ENCODE measurements at regions of chr16 and their contacts with region 1.

Region 1: DNA sequence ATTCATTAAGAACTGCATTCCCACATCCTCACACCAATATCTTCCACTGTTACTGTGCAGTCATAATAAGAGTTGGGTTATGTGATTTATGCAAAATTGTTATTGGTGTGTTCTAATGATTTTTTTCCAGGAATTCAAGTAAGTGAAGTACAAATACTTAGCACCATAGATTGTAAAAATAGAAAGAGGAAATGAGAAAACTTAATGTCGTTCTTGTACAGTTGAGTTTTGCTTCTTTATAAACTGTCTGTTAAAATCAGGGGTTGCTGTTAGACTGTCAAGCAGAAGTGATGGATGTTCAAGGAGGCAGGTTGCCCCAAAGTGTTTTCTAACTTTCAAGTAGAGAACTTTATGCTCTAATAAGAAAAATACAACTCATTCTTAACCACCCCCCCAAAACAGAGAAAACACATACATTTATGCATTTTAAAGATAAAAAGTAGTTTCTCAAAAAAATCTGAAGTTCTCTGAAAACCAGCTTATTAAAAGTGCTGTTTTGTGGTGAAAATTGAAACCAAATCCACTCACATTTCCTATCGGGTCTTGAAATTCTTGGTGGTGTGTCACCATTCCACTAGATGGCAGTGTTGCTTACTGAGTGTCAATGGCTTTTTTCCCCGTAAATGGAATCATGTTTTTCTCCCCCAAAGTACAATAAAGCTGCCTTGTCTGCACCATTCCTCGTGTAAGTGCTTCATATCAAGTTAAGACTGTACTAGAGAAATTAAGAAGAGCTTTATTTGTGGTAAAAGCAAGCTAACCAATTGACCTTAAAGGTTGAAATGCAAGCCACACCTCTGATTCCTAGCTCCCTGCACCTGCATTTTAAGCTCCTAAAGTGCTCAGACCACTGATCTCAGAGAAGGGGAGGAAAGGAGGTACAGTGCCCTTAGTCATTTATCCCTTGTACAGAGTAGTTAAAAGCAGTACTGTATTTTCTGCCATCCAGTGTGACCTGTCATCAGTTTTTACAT is 4.7 kb upstream of the IGSF6 start:
- DNase-seq: peak in 7 of 9 experiments; percentile 22 to 83 (median 43)
- ATAC-seq: peak; percentile 36
- H3K4me3 ChIP-seq: no peak overlapping the region
- H3K4me3 Mint-ChIP-seq: no peak overlapping the region
- H3K27ac ChIP-seq: no peak overlapping the region
- H3K27ac Mint-ChIP-seq: peak overlapping the region; percentile 30
- H3K4me1 ChIP-seq: peaks cover 21% of the 10 kb centered on the region
- H3K4me1 Mint-ChIP-seq: peaks cover 35% of the 10 kb centered on the region
- H3K27me3 ChIP-seq: no peaks in the 10 kb centered on the region
- H3K27me3 Mint-ChIP-seq: no peaks in the 10 kb centered on the region
- CTCF ChIP-seq: peak; percentile 93

Region 2: DNA sequence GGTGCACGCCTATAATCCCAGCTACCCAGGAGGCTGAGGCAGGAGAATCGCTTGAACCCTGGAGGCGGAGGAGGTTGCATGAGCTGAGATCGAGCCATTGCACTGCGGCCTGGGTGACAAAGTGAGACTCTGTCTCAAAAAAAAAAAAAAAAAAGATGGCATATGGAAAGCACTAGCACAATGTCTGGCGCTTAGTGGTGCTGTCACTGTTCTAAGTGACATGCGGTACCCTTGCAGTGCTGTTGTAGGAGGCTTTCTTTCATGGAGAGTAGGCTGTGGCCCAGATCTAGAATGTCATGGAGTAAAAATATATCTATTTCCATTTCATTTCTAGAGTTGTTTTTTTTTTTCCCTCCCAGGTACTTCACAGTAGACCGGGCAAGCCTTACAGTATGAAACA is 72.3 kb before region 1 on chr16:
- CTCF ChIA-PET with region 1: interaction called, 13 read pairs
- POLR2A ChIA-PET with region 1: no interaction called
- intact Hi-C with region 1: no loop called
- DNase-seq: no peak
- ATAC-seq: no peak
- H3K4me3 ChIP-seq: no peak overlapping the region
- H3K4me3 Mint-ChIP-seq: no peak overlapping the region
- H3K27ac ChIP-seq: no peak overlapping the region
- H3K27ac Mint-ChIP-seq: no peak overlapping the region
- H3K4me1 ChIP-seq: no peaks in the 10 kb centered on the region
- H3K4me1 Mint-ChIP-seq: peaks cover 2% of the 10 kb centered on the region
- H3K27me3 ChIP-seq: no peaks in the 10 kb centered on the region
- H3K27me3 Mint-ChIP-seq: no peaks in the 10 kb centered on the region
- CTCF ChIP-seq: no peak

Region 3: DNA sequence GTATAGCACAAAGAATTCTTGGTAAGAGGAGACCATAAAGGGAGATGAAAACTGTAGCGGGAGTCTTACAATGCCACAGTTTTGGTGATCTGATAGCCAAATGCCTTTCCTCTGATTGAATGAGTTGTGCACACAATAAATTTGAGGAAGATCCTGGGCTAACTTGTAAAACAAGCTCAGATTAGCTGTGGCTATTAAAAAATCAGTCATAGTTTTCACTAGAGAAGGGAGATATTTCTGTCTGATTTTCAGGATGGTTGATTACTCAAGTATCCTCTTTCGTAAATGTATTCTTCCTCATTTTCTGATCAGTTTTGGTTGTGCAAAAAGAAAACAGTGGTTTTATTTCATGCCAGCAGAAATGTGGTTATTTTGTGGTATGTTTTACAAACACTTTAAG is 66.8 kb before region 1 on chr16:
- CTCF ChIA-PET with region 1: interaction called, 13 read pairs
- POLR2A ChIA-PET with region 1: no interaction called
- intact Hi-C with region 1: no loop called
- DNase-seq: no peak
- ATAC-seq: no peak
- H3K4me3 ChIP-seq: no peak overlapping the region
- H3K4me3 Mint-ChIP-seq: no peak overlapping the region
- H3K27ac ChIP-seq: no peak overlapping the region
- H3K27ac Mint-ChIP-seq: no peak overlapping the region
- H3K4me1 ChIP-seq: no peaks in the 10 kb centered on the region
- H3K4me1 Mint-ChIP-seq: no peaks in the 10 kb centered on the region
- H3K27me3 ChIP-seq: no peaks in the 10 kb centered on the region
- H3K27me3 Mint-ChIP-seq: no peaks in the 10 kb centered on the region
- CTCF ChIP-seq: no peak

Region 4: DNA sequence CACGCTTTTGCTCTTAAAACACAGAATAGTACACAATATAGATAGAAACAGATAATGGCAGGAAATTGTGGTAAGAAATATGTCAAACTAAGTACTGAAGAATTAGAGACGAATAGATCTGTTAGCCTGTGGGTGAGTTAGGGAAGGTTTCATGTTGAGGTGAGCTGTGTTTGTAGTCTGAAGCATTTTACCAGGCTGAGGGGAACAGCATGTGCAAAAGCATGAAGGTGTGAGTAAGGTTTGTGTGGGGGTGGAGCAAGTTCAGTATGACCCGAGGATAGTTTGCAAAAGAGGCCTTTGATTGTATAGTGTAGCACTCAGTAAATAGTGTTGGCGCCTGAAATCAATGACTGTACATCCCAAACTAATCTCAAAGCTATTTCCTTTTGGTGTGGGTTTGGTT is 18.5 kb before region 1 on chr16:
- CTCF ChIA-PET with region 1: interaction called, 81 read pairs
- POLR2A ChIA-PET with region 1: interaction called, 4 read pairs
- intact Hi-C with region 1: loop called in 1 of 2 experiments (anchors 2 kb)
- DNase-seq: peak in 2 of 9 experiments; percentile 27 to 53
- ATAC-seq: peak; percentile 47
- H3K4me3 ChIP-seq: no peak overlapping the region
- H3K4me3 Mint-ChIP-seq: peak overlapping the region; percentile 4
- H3K27ac ChIP-seq: peak overlapping the region; percentile 8 to 60
- H3K27ac Mint-ChIP-seq: peak overlapping the region; percentile 87
- H3K4me1 ChIP-seq: peaks cover 29% of the 10 kb centered on the region
- H3K4me1 Mint-ChIP-seq: peaks cover 31% of the 10 kb centered on the region
- H3K27me3 ChIP-seq: no peaks in the 10 kb centered on the region
- H3K27me3 Mint-ChIP-seq: no peaks in the 10 kb centered on the region
- CTCF ChIP-seq: no peak

Region 5: DNA sequence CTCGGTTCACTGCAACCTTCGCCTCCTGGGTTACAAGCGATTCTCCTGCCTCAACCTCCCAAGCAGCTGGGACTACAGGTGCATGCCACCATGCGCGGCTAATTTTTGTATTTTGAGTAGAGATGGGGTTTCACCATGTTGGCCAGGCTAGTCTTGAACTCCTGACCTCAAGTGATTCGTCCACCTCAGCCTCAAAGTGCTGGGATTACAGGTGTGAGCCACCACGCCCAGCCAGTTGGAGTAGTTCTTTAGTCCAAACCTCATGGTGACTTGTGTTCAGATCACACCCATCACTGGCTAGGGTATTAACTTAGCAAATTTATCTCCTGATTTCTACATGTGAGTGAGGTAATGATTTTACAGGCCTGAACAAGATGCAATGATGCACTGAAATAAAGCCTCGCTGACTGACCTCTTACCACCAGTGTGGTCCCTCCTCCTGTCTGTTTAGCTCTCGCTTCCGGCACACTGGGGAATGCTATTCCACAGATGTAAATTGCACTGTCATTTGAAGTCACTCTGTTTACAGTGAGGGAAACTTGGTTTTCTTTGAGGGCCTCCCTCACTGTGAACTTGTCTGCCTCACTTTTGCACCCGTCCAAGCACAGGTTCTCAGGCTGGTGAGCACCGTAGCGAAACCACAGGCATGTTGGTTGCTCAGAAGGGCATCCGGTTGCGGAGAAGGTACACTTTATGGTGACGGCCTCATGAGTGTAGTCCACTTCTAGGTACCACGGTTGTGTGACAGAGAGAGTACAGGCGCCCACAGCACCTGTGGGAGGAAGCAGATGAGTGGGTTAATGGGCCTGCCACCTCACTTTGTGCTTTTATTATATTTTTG is 10.1 kb before region 1 on chr16:
- CTCF ChIA-PET with region 1: interaction called, 81 read pairs
- POLR2A ChIA-PET with region 1: interaction called, 14 read pairs
- intact Hi-C with region 1: no loop called
- DNase-seq: peak; percentile 42 to 90 (median 71)
- ATAC-seq: peak; percentile 78
- H3K4me3 ChIP-seq: peak overlapping the region in 1 of 2 experiments; percentile 9
- H3K4me3 Mint-ChIP-seq: peak overlapping the region; percentile 74
- H3K27ac ChIP-seq: peak overlapping the region; percentile 58 to 85
- H3K27ac Mint-ChIP-seq: peak overlapping the region; percentile 95
- H3K4me1 ChIP-seq: peaks cover 51% of the 10 kb centered on the region
- H3K4me1 Mint-ChIP-seq: peaks cover 55% of the 10 kb centered on the region
- H3K27me3 ChIP-seq: no peaks in the 10 kb centered on the region
- H3K27me3 Mint-ChIP-seq: no peaks in the 10 kb centered on the region
- CTCF ChIP-seq: no peak

Region 6: GRCh38 chr16:21698169-21699032 is 41.3 kb after region 1 on chr16:
- CTCF ChIA-PET with region 1: interaction called, 168 read pairs
- POLR2A ChIA-PET with region 1: interaction called, 4 read pairs
- intact Hi-C with region 1: loop called in 1 of 2 experiments (anchors 2 kb)
- DNase-seq: no peak
- ATAC-seq: no peak
- H3K4me3 ChIP-seq: no peak overlapping the region
- H3K4me3 Mint-ChIP-seq: no peak overlapping the region
- H3K27ac ChIP-seq: no peak overlapping the region
- H3K27ac Mint-ChIP-seq: no peak overlapping the region
- H3K4me1 ChIP-seq: no peaks in the 10 kb centered on the region
- H3K4me1 Mint-ChIP-seq: no peaks in the 10 kb centered on the region
- H3K27me3 ChIP-seq: no peaks in the 10 kb centered on the region
- H3K27me3 Mint-ChIP-seq: no peaks in the 10 kb centered on the region
- CTCF ChIP-seq: no peak

Region 7: GRCh38 chr16:21719283-21719682 is 62.2 kb after region 1 on chr16:
- CTCF ChIA-PET with region 1: interaction called, 12 read pairs
- POLR2A ChIA-PET with region 1: no interaction called
- intact Hi-C with region 1: no loop called
- DNase-seq: no peak
- ATAC-seq: no peak
- H3K4me3 ChIP-seq: no peak overlapping the region
- H3K4me3 Mint-ChIP-seq: no peak overlapping the region
- H3K27ac ChIP-seq: no peak overlapping the region
- H3K27ac Mint-ChIP-seq: no peak overlapping the region
- H3K4me1 ChIP-seq: no peaks in the 10 kb centered on the region
- H3K4me1 Mint-ChIP-seq: no peaks in the 10 kb centered on the region
- H3K27me3 ChIP-seq: no peaks in the 10 kb centered on the region
- H3K27me3 Mint-ChIP-seq: no peaks in the 10 kb centered on the region
- CTCF ChIP-seq: no peak

Region 8: DNA sequence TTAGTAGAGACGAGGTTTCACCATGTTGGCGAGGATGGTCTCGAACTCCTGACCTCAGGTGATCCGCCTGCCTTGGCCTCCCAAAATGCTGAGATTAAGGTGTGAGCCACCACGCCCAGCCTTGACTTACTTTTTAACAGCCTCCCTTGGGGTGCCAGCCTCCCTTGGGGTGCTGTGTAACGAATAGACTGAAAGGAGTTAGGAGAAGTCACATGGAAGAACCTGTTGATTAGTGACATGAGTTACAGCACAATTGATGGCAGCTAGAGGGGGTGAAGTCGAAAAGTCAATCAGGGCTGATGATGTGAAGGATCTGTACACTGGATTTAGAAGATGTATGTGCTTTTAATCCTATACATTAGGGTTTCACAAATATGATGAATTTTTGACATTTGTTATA is 756.7 kb after region 1 on chr16:
- CTCF ChIA-PET with region 1: no interaction called
- POLR2A ChIA-PET with region 1: no interaction called
- intact Hi-C with region 1: no loop called
- DNase-seq: no peak
- ATAC-seq: no peak
- H3K4me3 ChIP-seq: no peak overlapping the region
- H3K4me3 Mint-ChIP-seq: no peak overlapping the region
- H3K27ac ChIP-seq: no peak overlapping the region
- H3K27ac Mint-ChIP-seq: no peak overlapping the region
- H3K4me1 ChIP-seq: no peaks in the 10 kb centered on the region
- H3K4me1 Mint-ChIP-seq: no peaks in the 10 kb centered on the region
- H3K27me3 ChIP-seq: no peaks in the 10 kb centered on the region
- H3K27me3 Mint-ChIP-seq: no peaks in the 10 kb centered on the region
- CTCF ChIP-seq: no peak